ENCODE measurements at regions of chr3 and their contacts with region 1.

Region 1: GRCh38 chr3:79361748-79362378 is 405.9 kb downstream of the ROBO1 start:
- DNase-seq: peak in 2 of 5 donors; percentile 46 to 71
- H3K4me3 ChIP-seq: no peak overlapping the region
- H3K27ac ChIP-seq: no peak overlapping the region
- H3K4me1 ChIP-seq: no peaks in the 10 kb centered on the region
- H3K27me3 ChIP-seq: no peaks in the 10 kb centered on the region
- CTCF ChIP-seq: peak; percentile 59

Region 2: DNA sequence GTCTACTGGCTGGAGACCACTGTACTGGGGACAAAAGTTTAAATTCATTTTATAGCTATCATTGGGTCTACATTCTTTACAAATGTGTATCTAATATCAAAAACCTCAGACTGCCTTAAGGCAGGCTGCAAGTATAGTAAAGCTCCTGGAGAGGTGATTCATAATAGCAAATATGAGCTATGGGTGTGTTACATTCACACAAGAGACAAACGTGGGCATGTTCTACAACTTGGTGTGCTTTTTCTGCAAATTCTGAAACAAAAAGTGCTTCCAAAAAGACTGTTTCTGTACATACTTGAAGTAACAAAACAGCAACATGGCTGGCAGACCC is 695.4 kb before region 1 on chr3:
- intact Hi-C with region 1: loop called (anchors 10 kb)
- DNase-seq: no peak
- H3K4me3 ChIP-seq: no peak overlapping the region
- H3K27ac ChIP-seq: no peak overlapping the region
- H3K4me1 ChIP-seq: no peaks in the 10 kb centered on the region
- H3K27me3 ChIP-seq: no peaks in the 10 kb centered on the region
- CTCF ChIP-seq: no peak

Region 3: DNA sequence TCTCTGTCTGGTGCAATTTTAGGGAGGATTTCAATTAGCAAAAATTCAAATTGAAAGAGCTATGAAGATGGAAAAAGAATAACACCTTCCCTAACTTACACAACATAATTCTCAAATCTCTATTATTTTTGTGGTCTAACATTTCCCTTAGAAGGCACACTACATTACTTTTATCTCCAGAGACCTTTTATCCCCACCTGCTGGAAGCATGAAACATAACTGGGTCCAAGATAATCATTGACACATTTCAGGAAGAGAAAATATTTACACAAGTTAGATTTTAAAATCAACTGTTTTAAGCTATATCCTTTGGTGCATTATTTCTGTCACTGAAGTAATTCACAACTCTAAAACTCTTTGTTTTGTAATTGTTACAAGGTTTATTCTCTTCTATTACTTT is 373.5 kb before region 1 on chr3:
- intact Hi-C with region 1: no loop called
- DNase-seq: peak in 1 of 5 donors; percentile 38
- H3K4me3 ChIP-seq: no peak overlapping the region
- H3K27ac ChIP-seq: no peak overlapping the region
- H3K4me1 ChIP-seq: no peaks in the 10 kb centered on the region
- H3K27me3 ChIP-seq: no peaks in the 10 kb centered on the region
- CTCF ChIP-seq: no peak

Region 4: GRCh38 chr3:79032686-79033318 is 329.1 kb before region 1 on chr3:
- intact Hi-C with region 1: no loop called
- DNase-seq: peak in 2 of 5 donors; percentile 67 to 77
- H3K4me3 ChIP-seq: no peak overlapping the region
- H3K27ac ChIP-seq: no peak overlapping the region
- H3K4me1 ChIP-seq: no peaks in the 10 kb centered on the region
- H3K27me3 ChIP-seq: no peaks in the 10 kb centered on the region
- CTCF ChIP-seq: peak; percentile 49

Region 5: DNA sequence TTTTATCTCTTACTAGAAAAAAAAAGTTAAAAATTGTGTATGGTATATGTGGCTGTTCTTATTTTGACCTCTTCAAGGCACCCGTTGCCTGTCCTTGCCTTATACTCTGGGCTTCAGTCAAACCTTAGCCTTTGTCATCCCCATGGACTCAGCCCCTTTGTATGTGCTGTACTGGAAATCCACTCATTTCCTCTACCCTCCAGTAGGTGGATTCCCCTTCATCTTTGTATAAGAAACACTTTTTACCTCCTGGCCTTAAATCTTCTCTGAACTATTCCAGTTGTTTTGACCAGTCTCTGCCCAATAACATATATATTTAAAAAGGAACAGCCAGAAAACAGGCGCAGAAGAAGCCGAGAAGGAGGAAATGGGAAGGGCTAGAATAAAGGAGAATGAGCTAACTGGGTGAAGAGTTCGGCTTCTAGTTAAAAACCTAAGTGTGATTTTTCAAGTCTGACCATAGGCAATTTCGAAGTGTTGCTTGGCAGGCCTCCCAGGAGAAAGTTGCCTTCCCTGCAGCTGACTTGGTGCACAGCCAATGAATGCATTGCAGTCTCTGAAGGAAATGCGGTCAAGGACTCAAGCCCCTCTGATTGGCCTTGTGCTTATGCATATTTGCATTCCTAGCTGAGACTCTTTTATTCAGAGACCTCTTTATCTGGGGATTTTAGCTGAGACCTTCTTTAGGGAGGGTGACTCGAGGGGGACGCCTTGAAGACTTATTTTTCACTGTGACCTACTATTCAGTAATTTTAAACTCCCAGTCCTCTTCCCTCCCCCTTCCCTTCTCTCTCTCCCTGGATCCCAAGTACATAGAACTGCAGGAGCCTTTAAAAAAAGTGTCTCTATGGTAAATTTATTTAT is 128.5 kb after region 1 on chr3:
- intact Hi-C with region 1: no loop called
- DNase-seq: peak in 4 of 5 donors; percentile 50 to 93 (median 66)
- H3K4me3 ChIP-seq: no peak overlapping the region
- H3K27ac ChIP-seq: no peak overlapping the region
- H3K4me1 ChIP-seq: no peaks in the 10 kb centered on the region
- H3K27me3 ChIP-seq: no peaks in the 10 kb centered on the region
- CTCF ChIP-seq: no peak

Measured in kidney (tissue), 22 donors.